Caco-2 (cell line): ENCODE measurements at regions of chrX and their contacts with region 1.

Region 1: GRCh38 chrX:85544609-85545008 is 165.1 kb upstream of the POF1B start:
- DNase-seq: no peak
- H3K4me3 ChIP-seq: no peak overlapping the region
- H3K4me3 Mint-ChIP-seq: no peak overlapping the region
- H3K27ac Mint-ChIP-seq: no peak overlapping the region
- H3K4me1 ChIP-seq: no peaks in the 10 kb centered on the region
- H3K4me1 Mint-ChIP-seq: no peaks in the 10 kb centered on the region
- H3K27me3 ChIP-seq: no peaks in the 10 kb centered on the region
- H3K27me3 Mint-ChIP-seq: no peaks in the 10 kb centered on the region
- CTCF ChIP-seq: peak; percentile 22 to 41

Region 2: GRCh38 chrX:85084770-85085393 is 459.7 kb before region 1 on chrX:
- CTCF ChIA-PET with region 1: no interaction called
- POLR2A ChIA-PET with region 1: no interaction called
- intact Hi-C with region 1: loop called (anchors 10 kb)
- DNase-seq: peak in 1 of 2 experiments; percentile 35
- H3K4me3 ChIP-seq: no peak overlapping the region
- H3K4me3 Mint-ChIP-seq: no peak overlapping the region
- H3K27ac Mint-ChIP-seq: no peak overlapping the region
- H3K4me1 ChIP-seq: no peaks in the 10 kb centered on the region
- H3K4me1 Mint-ChIP-seq: peaks cover 19% of the 10 kb centered on the region
- H3K27me3 ChIP-seq: no peaks in the 10 kb centered on the region
- H3K27me3 Mint-ChIP-seq: no peaks in the 10 kb centered on the region
- CTCF ChIP-seq: peak; percentile 58 to 64

Region 3: DNA sequence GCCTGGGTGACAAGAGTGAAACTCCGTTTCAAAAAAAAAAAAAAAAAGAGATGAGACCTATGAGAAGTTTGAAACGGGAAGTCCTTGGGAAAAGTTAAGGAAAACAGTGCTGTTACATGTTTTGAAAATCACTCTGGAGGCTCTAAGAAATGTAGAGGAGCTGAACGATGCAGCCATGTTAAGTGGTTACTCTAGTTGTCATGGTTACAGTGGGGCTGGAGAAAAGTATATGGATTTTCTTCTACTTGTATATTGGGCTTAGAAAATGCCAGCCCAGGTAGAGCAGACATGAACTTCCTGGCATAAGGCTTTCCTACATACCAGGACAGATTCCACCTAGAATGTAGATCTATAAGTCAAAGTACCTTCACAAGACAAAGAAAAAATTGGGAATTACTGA is 270.3 kb before region 1 on chrX:
- CTCF ChIA-PET with region 1: no interaction called
- POLR2A ChIA-PET with region 1: no interaction called
- intact Hi-C with region 1: loop called (anchors 10 kb)
- DNase-seq: no peak
- H3K4me3 ChIP-seq: no peak overlapping the region
- H3K4me3 Mint-ChIP-seq: no peak overlapping the region
- H3K27ac Mint-ChIP-seq: no peak overlapping the region
- H3K4me1 ChIP-seq: no peaks in the 10 kb centered on the region
- H3K4me1 Mint-ChIP-seq: no peaks in the 10 kb centered on the region
- H3K27me3 ChIP-seq: no peaks in the 10 kb centered on the region
- H3K27me3 Mint-ChIP-seq: no peaks in the 10 kb centered on the region
- CTCF ChIP-seq: no peak

Region 4: DNA sequence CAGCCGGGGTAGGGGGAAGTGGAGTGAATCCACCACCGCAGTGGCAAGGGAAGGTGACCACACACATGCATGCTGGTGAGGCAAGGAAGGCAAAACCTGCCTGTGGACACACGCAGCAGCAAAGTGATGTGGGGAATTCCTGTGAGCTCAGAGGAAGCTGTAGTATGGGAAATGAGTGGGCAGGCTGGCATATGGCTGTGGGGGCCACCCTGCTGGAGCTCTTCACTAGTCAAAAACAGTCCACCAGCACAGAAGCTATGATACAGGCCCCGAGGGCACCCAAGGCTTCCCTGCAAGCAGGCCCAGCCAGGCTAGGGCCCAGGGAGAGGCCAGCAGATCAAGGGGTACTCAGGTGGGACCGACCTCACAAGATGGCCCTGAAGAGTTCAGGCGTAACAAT is 263.6 kb after region 1 on chrX:
- CTCF ChIA-PET with region 1: no interaction called
- POLR2A ChIA-PET with region 1: no interaction called
- intact Hi-C with region 1: no loop called
- DNase-seq: no peak
- H3K4me3 ChIP-seq: no peak overlapping the region
- H3K4me3 Mint-ChIP-seq: no peak overlapping the region
- H3K27ac Mint-ChIP-seq: no peak overlapping the region
- H3K4me1 ChIP-seq: no peaks in the 10 kb centered on the region
- H3K4me1 Mint-ChIP-seq: no peaks in the 10 kb centered on the region
- H3K27me3 ChIP-seq: no peaks in the 10 kb centered on the region
- H3K27me3 Mint-ChIP-seq: no peaks in the 10 kb centered on the region
- CTCF ChIP-seq: no peak

Region 5: DNA sequence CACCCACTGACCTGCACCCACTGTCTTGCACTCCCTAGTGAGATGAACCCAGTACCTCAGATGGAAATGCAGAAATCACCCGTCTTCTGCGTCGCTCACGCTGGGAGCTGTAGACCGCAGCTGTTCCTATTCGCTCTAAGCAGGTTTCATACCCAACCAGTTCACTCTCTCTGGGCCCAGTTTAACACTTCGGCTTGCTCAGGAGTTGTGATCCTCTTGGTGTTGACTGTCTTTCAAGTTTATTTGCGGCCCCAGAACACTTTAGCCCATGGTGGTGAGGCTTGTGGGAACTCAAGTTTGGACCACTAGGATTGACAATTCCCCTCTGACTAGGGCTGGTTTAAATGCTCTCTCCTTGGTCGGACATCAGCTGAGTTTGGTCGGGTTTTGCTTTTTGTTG is 750.7 kb after region 1 on chrX:
- CTCF ChIA-PET with region 1: no interaction called
- POLR2A ChIA-PET with region 1: no interaction called
- intact Hi-C with region 1: no loop called
- DNase-seq: no peak
- H3K4me3 ChIP-seq: no peak overlapping the region
- H3K4me3 Mint-ChIP-seq: no peak overlapping the region
- H3K27ac Mint-ChIP-seq: no peak overlapping the region
- H3K4me1 ChIP-seq: no peaks in the 10 kb centered on the region
- H3K4me1 Mint-ChIP-seq: no peaks in the 10 kb centered on the region
- H3K27me3 ChIP-seq: no peaks in the 10 kb centered on the region
- H3K27me3 Mint-ChIP-seq: no peaks in the 10 kb centered on the region
- CTCF ChIP-seq: no peak